Panc1 (cell line): ENCODE measurements at regions of chr4 and their contacts with region 1.

Region 1: DNA sequence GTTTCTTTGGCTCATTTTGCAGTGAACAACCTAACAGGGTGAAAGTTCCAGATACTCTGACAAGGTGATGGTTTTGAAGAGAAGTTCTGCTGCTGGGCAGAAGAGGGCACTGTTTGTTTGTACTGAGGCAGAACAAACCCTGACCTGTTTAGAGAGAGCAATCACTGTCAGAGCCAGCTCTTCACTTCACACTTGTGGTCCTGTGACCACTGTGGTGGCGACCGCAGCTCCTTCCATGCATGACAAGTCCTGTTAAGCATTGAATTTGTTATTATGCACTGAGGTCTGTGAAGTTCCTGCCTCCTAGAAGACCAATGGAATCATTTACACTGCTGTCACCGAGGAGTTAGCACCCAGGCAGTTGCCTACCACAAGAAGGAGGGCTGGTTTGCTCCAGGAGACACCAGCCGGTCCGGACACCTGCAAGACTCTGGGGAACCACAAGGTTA is 86.6 kb downstream of the ZNF330 start:
- DNase-seq: peak; percentile 46
- ATAC-seq: peak; percentile 92
- H3K4me3 ChIP-seq: no peak overlapping the region
- H3K27ac ChIP-seq: no peak overlapping the region
- H3K4me1 ChIP-seq: no peaks in the 10 kb centered on the region
- H3K27me3 ChIP-seq: no peaks in the 10 kb centered on the region
- CTCF ChIP-seq: peak; percentile 75

Region 2: DNA sequence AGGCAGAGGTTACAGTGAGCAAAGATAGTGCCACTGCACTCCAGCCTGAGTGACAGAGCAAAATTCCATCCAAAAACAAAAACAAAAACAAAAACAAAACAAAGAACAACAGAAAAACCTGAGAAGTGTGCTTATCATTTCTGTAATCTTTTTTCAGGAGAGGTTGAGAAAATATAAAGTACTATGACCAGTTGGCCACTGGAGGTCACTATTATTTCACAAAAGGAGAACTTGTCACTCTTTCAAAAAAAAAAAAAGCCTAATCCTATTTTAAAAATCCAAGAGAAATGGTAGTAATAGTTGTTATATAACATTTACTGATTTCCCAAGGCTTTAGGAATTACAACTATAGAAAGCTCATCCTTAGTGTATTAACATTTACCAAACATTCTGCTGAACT is 149.0 kb before region 1 on chr4:
- CTCF ChIA-PET with region 1: interaction called, 3 read pairs
- POLR2A ChIA-PET with region 1: no interaction called
- in situ Hi-C with region 1: no loop called
- intact Hi-C with region 1: loop called (anchors 10 kb)
- DNase-seq: peak; percentile 4
- ATAC-seq: no peak
- H3K4me3 ChIP-seq: no peak overlapping the region
- H3K27ac ChIP-seq: no peak overlapping the region
- H3K4me1 ChIP-seq: no peaks in the 10 kb centered on the region
- H3K27me3 ChIP-seq: no peaks in the 10 kb centered on the region
- CTCF ChIP-seq: peak; percentile 46; the same call in 1 of the 2 replicates

Region 3: DNA sequence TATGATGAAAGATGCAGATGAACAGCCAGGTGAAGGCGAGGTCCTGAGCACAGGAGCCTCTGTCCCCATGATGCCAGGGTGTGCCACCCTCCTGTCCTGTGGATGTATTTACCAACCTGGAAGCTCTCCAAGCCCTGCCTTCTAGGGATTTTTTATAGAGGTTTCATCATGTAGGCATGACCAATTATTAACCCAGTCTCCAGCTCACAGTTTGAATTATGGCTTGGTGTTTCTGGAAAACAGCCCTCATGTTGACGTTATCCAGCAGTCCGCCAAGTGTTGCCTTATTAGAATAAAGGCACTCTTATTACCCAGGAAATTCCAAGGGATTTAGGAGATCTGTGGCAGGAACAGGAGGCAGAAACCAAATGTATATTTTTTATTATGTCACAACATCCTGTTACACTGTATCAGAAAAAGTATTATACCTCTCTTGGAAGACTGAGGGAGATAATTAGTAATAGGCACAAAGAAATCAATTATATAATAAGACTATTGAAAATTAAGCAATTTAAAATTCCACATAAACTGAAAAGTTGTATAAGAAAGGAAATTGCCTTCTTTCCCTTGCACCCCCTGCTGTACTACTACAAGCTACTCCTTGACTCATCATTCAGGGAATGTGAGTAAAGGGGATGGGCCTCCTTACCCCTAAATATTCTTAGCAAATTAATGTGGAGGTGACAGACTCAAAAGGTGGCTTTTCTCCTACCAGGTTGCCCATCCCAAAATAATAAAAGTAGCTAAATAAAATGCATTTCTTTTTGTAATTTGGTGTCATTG is 43.0 kb after region 1 on chr4:
- CTCF ChIA-PET with region 1: no interaction called
- POLR2A ChIA-PET with region 1: no interaction called
- in situ Hi-C with region 1: no loop called
- intact Hi-C with region 1: no loop called
- DNase-seq: no peak
- ATAC-seq: no peak
- H3K4me3 ChIP-seq: no peak overlapping the region
- H3K27ac ChIP-seq: no peak overlapping the region
- H3K4me1 ChIP-seq: no peaks in the 10 kb centered on the region
- H3K27me3 ChIP-seq: no peaks in the 10 kb centered on the region
- CTCF ChIP-seq: no peak

Region 4: GRCh38 chr4:141416219-141416618 is 109.0 kb after region 1 on chr4:
- CTCF ChIA-PET with region 1: no interaction called
- POLR2A ChIA-PET with region 1: no interaction called
- in situ Hi-C with region 1: no loop called
- intact Hi-C with region 1: no loop called
- DNase-seq: no peak
- ATAC-seq: no peak
- H3K4me3 ChIP-seq: no peak overlapping the region
- H3K27ac ChIP-seq: no peak overlapping the region
- H3K4me1 ChIP-seq: no peaks in the 10 kb centered on the region
- H3K27me3 ChIP-seq: no peaks in the 10 kb centered on the region
- CTCF ChIP-seq: no peak